ENCODE measurements at regions of chr9 and their contacts with region 1.

Region 1: GRCh38 chr9:91036826-91037510 is 235.3 kb downstream of the SYK start:
- DNase-seq: peak; percentile 92
- ATAC-seq: peak; percentile 92
- H3K4me3 ChIP-seq: no peak overlapping the region
- H3K27ac ChIP-seq: peak overlapping the region; percentile 78
- H3K4me1 ChIP-seq: peaks cover 26% of the 10 kb centered on the region
- H3K27me3 ChIP-seq: no peaks in the 10 kb centered on the region
- CTCF ChIP-seq: peak; percentile 82
- POLR2A ChIP-seq: peak; percentile 37; the same call in 1 of the 2 replicates
- RAD21 ChIP-seq: peak; percentile 94

Region 2: DNA sequence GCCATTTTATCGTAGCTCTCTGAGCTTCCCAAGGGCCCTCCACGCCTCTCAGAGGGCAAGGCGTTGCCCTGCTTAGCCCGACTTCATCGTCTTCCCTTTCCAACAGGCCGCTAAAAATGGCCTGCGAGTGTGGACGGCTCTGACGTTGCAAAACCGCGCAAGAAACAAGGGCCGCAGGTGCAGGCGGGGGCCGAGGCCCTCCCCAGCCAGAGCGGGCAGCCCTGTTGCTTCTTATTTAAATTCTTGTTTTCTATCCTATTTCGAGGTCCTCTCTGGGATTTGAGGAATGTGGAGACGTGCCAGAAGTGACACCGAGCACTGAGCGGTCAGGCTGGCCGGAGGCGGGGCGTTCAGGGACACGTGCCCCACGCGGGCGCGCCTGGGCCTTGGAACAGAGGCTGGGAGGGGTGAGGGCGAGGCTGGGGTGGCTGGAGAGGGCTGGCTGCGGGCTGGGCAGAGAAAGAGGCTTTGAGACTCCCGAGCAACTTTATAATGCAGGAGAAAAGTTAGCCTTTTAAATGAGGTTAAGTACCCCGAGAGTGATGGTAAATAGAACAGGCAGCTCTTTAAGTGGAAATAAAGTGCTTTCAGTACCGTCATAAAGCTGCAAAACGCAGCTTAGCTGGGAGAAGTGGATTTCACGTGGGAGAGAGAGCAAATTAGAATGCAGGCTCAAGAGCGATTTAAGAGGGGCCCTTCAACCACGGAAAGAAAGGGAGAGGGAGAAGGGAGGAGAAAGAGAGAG is 81.2 kb after region 1 on chr9:
- CTCF ChIA-PET with region 1: no interaction called
- POLR2A ChIA-PET with region 1: no interaction called
- dilution Hi-C with region 1: no loop called
- in situ Hi-C with region 1: no loop called
- intact Hi-C with region 1: loop called (anchors 5 kb)
- DNase-seq: peak; percentile 82
- ATAC-seq: peak; percentile 86
- H3K4me3 ChIP-seq: no peak overlapping the region
- H3K27ac ChIP-seq: peak overlapping the region; percentile 99
- H3K4me1 ChIP-seq: peaks cover 21% of the 10 kb centered on the region
- H3K27me3 ChIP-seq: no peaks in the 10 kb centered on the region
- CTCF ChIP-seq: no peak
- POLR2A ChIP-seq: no peak
- RAD21 ChIP-seq: no peak

Region 3: GRCh38 chr9:91131433-91131839 is 94.5 kb after region 1 on chr9:
- CTCF ChIA-PET with region 1: no interaction called
- POLR2A ChIA-PET with region 1: no interaction called
- dilution Hi-C with region 1: no loop called
- in situ Hi-C with region 1: no loop called
- intact Hi-C with region 1: no loop called
- DNase-seq: peak; percentile 100
- ATAC-seq: peak; percentile 85
- H3K4me3 ChIP-seq: no peak overlapping the region
- H3K27ac ChIP-seq: peak overlapping the region; percentile 91
- H3K4me1 ChIP-seq: peaks cover 21% of the 10 kb centered on the region
- H3K27me3 ChIP-seq: no peaks in the 10 kb centered on the region
- CTCF ChIP-seq: no peak
- POLR2A ChIP-seq: peak; percentile 87
- RAD21 ChIP-seq: peak; percentile 31; the same call in 1 of the 2 replicates

Region 4: DNA sequence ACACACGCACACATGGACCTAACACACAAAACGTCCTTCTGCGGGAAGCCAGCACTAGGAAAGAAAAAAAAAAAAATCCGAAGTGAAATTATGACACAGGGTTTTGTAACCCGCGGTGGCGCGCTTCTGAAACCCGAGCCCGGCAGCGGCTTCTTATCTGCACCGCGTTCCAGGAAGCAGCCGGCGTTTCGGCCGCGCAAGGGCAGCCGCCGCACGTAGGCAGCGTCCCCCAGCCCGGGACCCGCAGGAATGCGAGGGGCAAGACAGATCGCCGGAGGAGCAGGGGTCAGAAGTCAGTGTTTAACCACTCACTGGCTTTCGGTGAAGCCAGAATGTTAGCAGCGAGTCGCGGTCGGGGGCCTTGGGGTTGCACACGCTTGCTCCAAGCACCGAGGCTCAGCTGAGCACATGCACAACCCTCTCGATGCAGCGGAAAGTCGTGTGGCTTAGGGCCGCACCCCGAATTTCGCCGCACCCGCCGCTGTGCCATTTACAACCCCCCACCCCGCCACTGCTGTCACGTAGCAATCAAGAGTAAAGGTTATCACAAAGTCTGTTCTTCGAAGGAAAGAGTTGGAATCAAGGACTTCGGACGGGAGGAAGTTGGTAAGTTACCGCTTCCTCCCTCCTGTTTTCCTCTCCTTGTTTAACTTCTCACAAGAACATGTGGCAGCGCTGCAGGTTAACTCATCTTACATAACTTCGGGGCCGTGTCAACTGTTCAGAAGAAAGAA is 156.9 kb after region 1 on chr9:
- CTCF ChIA-PET with region 1: no interaction called
- POLR2A ChIA-PET with region 1: no interaction called
- dilution Hi-C with region 1: no loop called
- in situ Hi-C with region 1: no loop called
- intact Hi-C with region 1: loop called (anchors 1 kb)
- DNase-seq: peak; percentile 96
- ATAC-seq: peak; percentile 61
- H3K4me3 ChIP-seq: peak overlapping the region; percentile 15
- H3K27ac ChIP-seq: peak overlapping the region; percentile 94
- H3K4me1 ChIP-seq: peaks cover 37% of the 10 kb centered on the region
- H3K27me3 ChIP-seq: no peaks in the 10 kb centered on the region
- CTCF ChIP-seq: no peak
- POLR2A ChIP-seq: peak; percentile 64
- RAD21 ChIP-seq: peak; percentile 4

Region 5: DNA sequence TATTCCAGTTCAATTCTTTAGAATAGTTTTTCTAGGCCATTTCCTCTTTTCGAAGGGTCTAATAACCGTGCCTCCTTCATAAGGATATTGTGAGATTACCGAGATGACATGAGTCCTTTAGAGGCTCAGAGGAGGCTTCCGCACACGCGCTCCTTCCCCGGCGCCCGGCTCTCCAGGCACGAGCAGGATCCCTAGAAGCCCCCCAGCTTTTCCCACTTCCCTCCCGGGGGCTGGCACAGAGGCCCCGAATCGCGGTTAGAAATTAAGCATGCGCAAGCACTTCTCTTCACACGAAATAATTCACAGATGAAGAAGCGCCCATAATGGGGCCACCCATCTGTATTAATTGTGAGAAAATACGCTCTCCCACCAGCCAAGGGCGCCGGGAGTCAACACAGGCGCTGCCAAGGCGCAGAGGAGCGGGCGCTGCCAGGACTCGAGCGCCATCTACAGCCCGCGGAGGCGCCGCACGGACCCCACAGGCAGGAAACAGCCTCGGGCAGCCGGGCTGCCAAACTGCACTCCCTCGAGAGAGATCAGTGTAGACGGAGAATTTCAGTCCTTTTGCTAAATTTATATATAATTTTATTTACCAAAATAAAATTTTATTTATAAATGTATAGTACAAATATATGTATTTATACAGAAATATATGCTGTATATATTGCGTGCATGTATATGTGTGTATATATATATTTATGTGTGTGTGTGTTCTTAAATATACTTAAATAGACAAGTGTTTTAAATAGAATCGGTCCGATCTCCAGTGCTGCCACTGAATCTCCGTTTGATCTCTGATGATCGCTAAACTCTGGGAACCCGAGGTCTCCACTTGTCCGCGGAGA is 644.7 kb after region 1 on chr9:
- CTCF ChIA-PET with region 1: no interaction called
- POLR2A ChIA-PET with region 1: no interaction called
- dilution Hi-C with region 1: no loop called
- in situ Hi-C with region 1: no loop called
- intact Hi-C with region 1: loop called (anchors 2 kb)
- DNase-seq: peak; percentile 64
- ATAC-seq: peak; percentile 89
- H3K4me3 ChIP-seq: no peak overlapping the region
- H3K27ac ChIP-seq: no peak overlapping the region
- H3K4me1 ChIP-seq: peaks cover 11% of the 10 kb centered on the region
- H3K27me3 ChIP-seq: no peaks in the 10 kb centered on the region
- CTCF ChIP-seq: peak; percentile 90
- POLR2A ChIP-seq: no peak
- RAD21 ChIP-seq: peak; percentile 94